Activated B cell treated with CpG ODN at 0.5 μM for 24 hours (primary cell): ENCODE measurements at regions of chr3 and their contacts with region 1.

Region 1: DNA sequence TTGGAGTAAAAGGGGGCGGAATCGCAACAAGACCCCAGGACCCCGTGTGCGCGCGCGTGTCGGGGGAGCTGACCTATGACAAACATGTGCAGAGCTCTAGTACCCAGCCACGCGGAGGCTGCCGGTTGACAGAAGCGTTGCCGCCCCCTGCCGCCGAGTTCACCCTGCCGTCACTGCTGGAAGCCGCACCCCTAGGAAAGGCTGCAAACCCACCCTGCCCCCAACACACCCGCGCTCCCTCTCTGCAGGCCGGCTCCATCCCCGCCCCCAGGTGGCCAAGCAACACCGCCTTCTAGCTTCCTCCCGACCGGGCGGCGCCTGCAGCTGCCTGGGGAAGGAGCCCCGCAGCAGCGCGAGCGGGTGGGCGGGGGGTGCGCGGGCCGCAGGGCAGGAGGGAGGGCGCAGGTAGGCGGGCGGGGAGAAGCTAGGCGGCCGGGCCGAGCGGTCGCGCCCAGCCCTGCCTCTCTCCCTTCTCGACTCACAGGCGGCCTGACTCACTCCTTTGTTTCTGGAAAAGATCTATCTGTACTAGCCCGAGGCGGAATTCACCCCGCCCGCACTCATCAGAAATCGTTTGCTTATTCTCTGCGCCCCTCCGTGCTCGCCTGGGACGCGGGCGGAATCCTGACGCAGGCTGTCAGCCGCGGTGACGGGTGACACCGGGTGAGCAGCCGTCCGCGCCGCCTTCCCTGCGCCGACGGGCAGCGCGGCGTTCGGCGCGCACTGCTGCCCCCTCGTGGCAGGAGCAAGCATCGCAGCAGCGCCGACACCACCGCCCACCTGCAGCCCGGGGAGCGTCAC is 160.8 kb downstream of the GAP43 start:
- DNase-seq: peak; percentile 86
- ATAC-seq: peak; percentile 87
- H3K4me3 Mint-ChIP-seq: peak overlapping the region; percentile 93
- H3K27ac Mint-ChIP-seq: peak overlapping the region; percentile 93
- H3K4me1 Mint-ChIP-seq: peaks cover 14% of the 10 kb centered on the region
- H3K27me3 Mint-ChIP-seq: peaks cover 8% of the 10 kb centered on the region
- CTCF ChIP-seq: peak; percentile 73

Region 2: GRCh38 chr3:113844622-113845222 is 1939.4 kb before region 1 on chr3:
- CTCF ChIA-PET with region 1: no interaction called
- POLR2A ChIA-PET with region 1: no interaction called
- intact Hi-C with region 1: loop called (anchors 10 kb)
- DNase-seq: no peak
- ATAC-seq: peak; percentile 61
- H3K4me3 Mint-ChIP-seq: no peak overlapping the region
- H3K27ac Mint-ChIP-seq: no peak overlapping the region
- H3K4me1 Mint-ChIP-seq: peaks cover 3% of the 10 kb centered on the region
- H3K27me3 Mint-ChIP-seq: no peaks in the 10 kb centered on the region
- CTCF ChIP-seq: no peak

Region 3: GRCh38 chr3:114454551-114455251 is 1329.4 kb before region 1 on chr3:
- CTCF ChIA-PET with region 1: no interaction called
- POLR2A ChIA-PET with region 1: no interaction called
- intact Hi-C with region 1: loop called (anchors 5 kb)
- DNase-seq: no peak
- ATAC-seq: peak; percentile 43
- H3K4me3 Mint-ChIP-seq: no peak overlapping the region
- H3K27ac Mint-ChIP-seq: no peak overlapping the region
- H3K4me1 Mint-ChIP-seq: peaks cover 52% of the 10 kb centered on the region
- H3K27me3 Mint-ChIP-seq: no peaks in the 10 kb centered on the region
- CTCF ChIP-seq: no peak

Region 4: DNA sequence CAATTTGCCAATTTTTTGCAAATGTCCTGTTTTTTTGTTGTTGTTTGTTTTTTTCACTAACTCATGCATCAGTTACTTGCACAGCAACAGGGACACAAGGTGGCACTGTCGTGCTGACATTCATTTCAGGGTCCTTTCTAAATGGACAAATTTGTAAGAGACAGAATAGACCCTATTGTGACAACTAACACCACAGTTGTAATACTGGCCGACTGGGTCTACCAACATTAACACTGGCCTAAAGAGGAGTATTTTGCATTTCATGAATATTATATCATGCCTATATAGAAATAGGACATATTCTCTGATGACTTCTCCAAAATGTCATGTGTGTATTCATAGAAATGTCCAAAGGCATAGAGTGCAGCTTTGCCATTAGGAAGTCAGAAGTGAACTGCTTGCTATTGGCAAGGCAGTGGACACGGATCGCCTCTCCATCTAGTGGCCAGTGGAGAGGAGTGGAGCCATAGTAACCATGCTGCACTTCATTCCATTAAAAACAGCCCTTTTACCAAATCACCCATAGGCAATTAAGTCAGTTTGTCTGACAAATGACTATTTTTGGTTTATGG is 691.8 kb before region 1 on chr3:
- CTCF ChIA-PET with region 1: interaction called, 8 read pairs
- POLR2A ChIA-PET with region 1: no interaction called
- intact Hi-C with region 1: loop called (anchors 1 kb)
- DNase-seq: no peak
- ATAC-seq: peak; percentile 45
- H3K4me3 Mint-ChIP-seq: no peak overlapping the region
- H3K27ac Mint-ChIP-seq: no peak overlapping the region
- H3K4me1 Mint-ChIP-seq: peaks cover 5% of the 10 kb centered on the region
- H3K27me3 Mint-ChIP-seq: no peaks in the 10 kb centered on the region
- CTCF ChIP-seq: no peak

Region 5: GRCh38 chr3:115217678-115218451 is 566.3 kb before region 1 on chr3:
- CTCF ChIA-PET with region 1: interaction called, 19 read pairs
- POLR2A ChIA-PET with region 1: no interaction called
- intact Hi-C with region 1: loop called (anchors 1 kb)
- DNase-seq: no peak
- ATAC-seq: peak; percentile 50
- H3K4me3 Mint-ChIP-seq: no peak overlapping the region
- H3K27ac Mint-ChIP-seq: no peak overlapping the region
- H3K4me1 Mint-ChIP-seq: peaks cover 3% of the 10 kb centered on the region
- H3K27me3 Mint-ChIP-seq: peaks cover 18% of the 10 kb centered on the region
- CTCF ChIP-seq: no peak

Region 6: GRCh38 chr3:115692887-115693524 is 91.1 kb before region 1 on chr3:
- CTCF ChIA-PET with region 1: interaction called, 4 read pairs
- POLR2A ChIA-PET with region 1: no interaction called
- intact Hi-C with region 1: loop called (anchors 1 kb)
- DNase-seq: peak; percentile 28
- ATAC-seq: peak; percentile 95
- H3K4me3 Mint-ChIP-seq: no peak overlapping the region
- H3K27ac Mint-ChIP-seq: no peak overlapping the region
- H3K4me1 Mint-ChIP-seq: peaks cover 3% of the 10 kb centered on the region
- H3K27me3 Mint-ChIP-seq: no peaks in the 10 kb centered on the region
- CTCF ChIP-seq: no peak

Region 7: DNA sequence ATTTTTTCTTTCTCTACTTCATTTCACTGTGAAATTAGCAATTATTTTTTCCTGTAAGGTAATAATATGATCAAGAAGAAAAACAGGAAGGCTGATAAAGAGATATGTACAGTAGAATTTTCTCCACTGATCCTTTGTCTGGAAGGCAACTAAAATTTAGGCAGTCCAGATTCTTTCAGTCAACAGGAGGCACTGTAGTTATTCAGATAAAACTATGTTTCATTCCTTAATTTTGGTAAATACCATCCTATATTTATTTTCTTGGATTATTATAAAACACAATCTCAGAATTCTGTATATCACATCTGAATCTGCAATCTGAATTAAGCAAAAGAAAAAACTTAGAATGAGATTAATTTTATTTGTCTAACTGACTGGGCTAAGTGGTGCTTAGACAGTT is 317.9 kb after region 1 on chr3:
- CTCF ChIA-PET with region 1: no interaction called
- POLR2A ChIA-PET with region 1: no interaction called
- intact Hi-C with region 1: no loop called
- DNase-seq: no peak
- ATAC-seq: no peak
- H3K4me3 Mint-ChIP-seq: no peak overlapping the region
- H3K27ac Mint-ChIP-seq: no peak overlapping the region
- H3K4me1 Mint-ChIP-seq: no peaks in the 10 kb centered on the region
- H3K27me3 Mint-ChIP-seq: no peaks in the 10 kb centered on the region
- CTCF ChIP-seq: no peak

Region 8: DNA sequence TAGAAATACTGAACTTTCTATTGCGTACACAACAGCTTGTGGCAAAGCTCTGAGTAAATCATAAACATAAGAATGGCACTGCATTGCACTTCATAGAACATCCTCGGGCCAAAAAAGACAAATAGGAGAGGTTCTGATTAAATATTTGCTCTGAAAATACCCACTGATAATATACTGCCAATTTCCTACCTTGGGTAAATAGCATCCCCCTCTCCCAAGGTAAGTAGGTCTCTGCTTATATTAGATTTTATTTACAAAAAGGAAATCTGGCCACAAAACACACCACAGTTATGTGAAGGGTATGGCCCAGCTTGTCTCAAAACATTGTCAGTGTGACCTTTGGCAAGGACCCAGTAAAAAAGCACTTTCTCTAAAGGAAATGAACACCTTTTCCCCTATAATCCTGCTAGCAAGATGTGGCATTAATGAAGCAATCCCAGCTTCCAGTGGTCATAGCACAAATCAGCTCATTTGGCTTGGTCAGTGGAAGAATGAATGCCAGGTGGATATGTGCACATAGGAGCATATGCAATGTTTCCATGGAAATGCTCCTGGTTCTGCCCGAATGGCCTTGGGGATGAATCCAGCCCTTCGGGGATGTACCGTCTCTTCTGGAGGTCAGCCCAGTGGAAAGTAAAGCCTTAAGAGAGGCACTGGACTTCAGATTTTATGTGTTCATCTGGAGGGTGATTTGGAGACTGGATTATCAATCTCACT is 345.2 kb after region 1 on chr3:
- CTCF ChIA-PET with region 1: no interaction called
- POLR2A ChIA-PET with region 1: no interaction called
- intact Hi-C with region 1: no loop called
- DNase-seq: no peak
- ATAC-seq: no peak
- H3K4me3 Mint-ChIP-seq: no peak overlapping the region
- H3K27ac Mint-ChIP-seq: no peak overlapping the region
- H3K4me1 Mint-ChIP-seq: no peaks in the 10 kb centered on the region
- H3K27me3 Mint-ChIP-seq: no peaks in the 10 kb centered on the region
- CTCF ChIP-seq: no peak